ENCODE measurements at regions of chr14 and their contacts with region 1.

Region 1: GRCh38 chr14:66359500-66359899 is 126.7 kb upstream of the CCDC196 start:
- DNase-seq: peak in 1 of 2 donors; percentile 15
- ATAC-seq: no peak
- H3K4me3 ChIP-seq: no peak overlapping the region
- H3K27ac ChIP-seq: no peak overlapping the region
- H3K4me1 ChIP-seq: no peaks in the 10 kb centered on the region
- H3K27me3 ChIP-seq: peaks cover 0 to 5% (median 0%) of the 10 kb centered on the region in 7 donors
- CTCF ChIP-seq: peak; percentile 55 to 84 (median 68)

Region 2: GRCh38 chr14:66315548-66315947 is 44.0 kb before region 1 on chr14:
- intact Hi-C with region 1: no loop called
- DNase-seq: no peak
- ATAC-seq: no peak
- H3K4me3 ChIP-seq: no peak overlapping the region
- H3K27ac ChIP-seq: no peak overlapping the region
- H3K4me1 ChIP-seq: peaks cover 0 to 14% (median 5%) of the 10 kb centered on the region in 9 donors
- H3K27me3 ChIP-seq: no peaks in the 10 kb centered on the region
- CTCF ChIP-seq: no peak

Region 3: GRCh38 chr14:66330916-66331315 is 28.6 kb before region 1 on chr14:
- intact Hi-C with region 1: no loop called
- DNase-seq: no peak
- ATAC-seq: peak in 1 of 8 donors; percentile 46
- H3K4me3 ChIP-seq: no peak overlapping the region
- H3K27ac ChIP-seq: no peak overlapping the region
- H3K4me1 ChIP-seq: no peaks in the 10 kb centered on the region
- H3K27me3 ChIP-seq: no peaks in the 10 kb centered on the region
- CTCF ChIP-seq: no peak

Region 4: GRCh38 chr14:66403183-66403582 is 43.7 kb after region 1 on chr14:
- intact Hi-C with region 1: loop called in 7 of 10 experiments (anchors 2 to 5 kb)
- DNase-seq: no peak
- ATAC-seq: peak in 6 of 8 donors; percentile 20 to 69 (median 60)
- H3K4me3 ChIP-seq: no peak overlapping the region
- H3K27ac ChIP-seq: no peak overlapping the region
- H3K4me1 ChIP-seq: peaks cover 0 to 14% (median 5%) of the 10 kb centered on the region in 9 donors
- H3K27me3 ChIP-seq: no peaks in the 10 kb centered on the region
- CTCF ChIP-seq: peak in 7 of 9 donors; percentile 33 to 60 (median 45)

Region 5: DNA sequence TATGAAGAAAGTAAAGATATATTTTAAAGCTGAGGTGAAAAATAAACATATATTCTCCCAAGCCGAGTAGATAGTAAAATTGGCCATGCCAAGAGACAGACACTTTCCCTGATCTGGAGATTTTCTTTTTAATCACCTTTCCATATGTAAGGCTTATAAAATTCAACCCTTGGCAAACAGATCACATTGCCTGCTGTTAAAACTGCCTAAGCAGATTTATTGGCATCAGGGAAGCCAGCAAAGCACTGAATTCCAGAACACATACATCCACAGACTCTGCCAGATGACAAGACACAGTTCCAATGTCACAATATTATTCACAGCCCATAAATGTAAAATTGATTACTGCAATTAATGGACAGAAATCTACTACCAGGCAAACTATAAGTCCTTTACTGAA is 751.5 kb after region 1 on chr14:
- intact Hi-C with region 1: loop called in 1 of 10 experiments (anchors 10 kb)
- DNase-seq: no peak
- ATAC-seq: no peak
- H3K4me3 ChIP-seq: no peak overlapping the region
- H3K27ac ChIP-seq: no peak overlapping the region
- H3K4me1 ChIP-seq: no peaks in the 10 kb centered on the region
- H3K27me3 ChIP-seq: no peaks in the 10 kb centered on the region
- CTCF ChIP-seq: no peak

Region 6: GRCh38 chr14:67285876-67286452 is 926.5 kb after region 1 on chr14:
- intact Hi-C with region 1: loop called in 1 of 10 experiments (anchors 5 kb)
- DNase-seq: no peak
- ATAC-seq: no peak
- H3K4me3 ChIP-seq: no peak overlapping the region
- H3K27ac ChIP-seq: no peak overlapping the region
- H3K4me1 ChIP-seq: no peaks in the 10 kb centered on the region
- H3K27me3 ChIP-seq: no peaks in the 10 kb centered on the region
- CTCF ChIP-seq: peak; percentile 43 to 78 (median 62)

Measured in heart right ventricle (tissue), 16 donors.